ENCODE measurements at regions of chr21 and their contacts with region 1.

Region 1: DNA sequence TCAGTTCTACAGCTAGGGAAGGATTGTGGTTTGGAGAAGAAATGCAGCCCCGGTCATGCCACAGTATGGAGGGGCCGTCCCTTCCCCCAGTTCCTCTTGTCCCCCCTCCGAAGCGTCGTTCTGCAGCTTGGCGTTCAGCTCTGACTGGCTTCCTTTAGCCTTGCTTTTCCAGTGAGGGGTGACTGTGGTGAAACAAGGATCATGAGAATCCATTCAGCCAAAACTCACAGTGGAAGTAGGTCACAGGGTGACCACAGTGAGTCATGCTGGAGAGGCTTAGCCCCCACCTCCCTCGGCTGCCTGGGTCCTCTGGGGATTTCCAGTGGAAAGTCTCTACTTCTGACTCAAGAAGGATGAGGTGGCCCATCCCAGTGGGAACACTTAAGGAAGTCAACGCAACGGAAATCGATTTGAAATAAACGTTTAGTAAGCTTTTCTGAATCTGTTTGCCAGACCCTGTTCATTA is 37.3 kb upstream of the COL6A2 start:
- DNase-seq: peak; percentile 82 to 88 (median 84)
- ATAC-seq: peak; percentile 48 to 75 (median 72)
- H3K4me3 ChIP-seq: no peak overlapping the region
- H3K27ac ChIP-seq: peak overlapping the region; percentile 46 to 94 (median 80)
- H3K4me1 ChIP-seq: peaks cover 0 to 38% (median 25%) of the 10 kb centered on the region in 12 donors
- H3K27me3 ChIP-seq: peaks cover 0 to 7% (median 0%) of the 10 kb centered on the region in 9 donors
- CTCF ChIP-seq: no peak
- POLR2A ChIP-seq: no peak

Region 2: DNA sequence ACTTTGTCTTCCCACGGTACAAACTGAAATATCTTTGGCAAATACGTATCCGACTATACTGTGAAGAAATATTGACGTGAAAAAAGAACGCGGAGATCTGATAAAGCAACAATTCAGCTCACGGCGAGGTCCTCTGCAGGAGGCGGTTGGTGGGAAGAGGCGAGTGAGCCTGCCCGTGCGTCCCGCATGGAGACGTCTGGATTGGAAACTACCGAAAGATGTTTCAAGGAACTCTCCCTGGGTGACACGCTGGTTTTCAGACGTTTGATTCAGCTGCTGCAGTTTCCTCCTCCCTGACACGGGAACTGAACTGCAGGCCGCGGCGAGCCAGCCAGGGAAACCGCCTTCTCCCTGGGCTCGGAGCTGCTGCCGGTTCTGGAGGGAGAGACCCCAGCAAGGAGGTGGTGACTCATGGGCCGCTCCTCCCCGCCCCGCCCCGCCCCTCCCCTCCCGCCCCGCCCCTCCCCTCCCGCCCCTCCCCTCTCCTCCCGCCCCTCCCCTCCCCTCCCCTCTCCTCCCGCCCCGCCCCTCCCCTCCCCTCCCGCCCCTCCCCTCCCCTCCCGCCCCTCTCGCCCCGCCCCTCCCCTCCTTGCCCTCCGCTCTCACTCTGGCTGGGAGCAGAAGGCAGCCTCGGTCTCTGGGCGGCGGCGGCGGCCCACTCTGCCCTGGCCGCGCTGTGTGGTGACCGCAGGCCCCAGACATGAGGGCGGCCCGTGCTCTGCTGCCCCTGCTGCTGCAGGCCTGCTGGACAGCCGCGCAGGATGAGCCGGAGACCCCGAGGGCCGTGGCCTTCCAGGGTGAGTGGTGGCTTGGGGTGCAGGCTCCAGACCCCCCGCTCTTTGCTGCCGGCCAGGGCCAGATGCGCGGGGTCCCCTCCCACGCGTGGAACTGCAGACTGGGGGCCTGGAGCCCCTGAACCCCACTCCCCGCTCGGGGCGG is 79.2 kb before region 1 on chr21 and contains the start of gene COL6A1:
- intact Hi-C with region 1: loop called in 2 of 10 experiments (anchors 5 to 10 kb)
- DNase-seq: peak; percentile 84 to 89 (median 88)
- ATAC-seq: peak; percentile 74 to 82 (median 77)
- H3K4me3 ChIP-seq: peak within 1 kb of the TSS; percentile 65 to 99 (median 88)
- H3K27ac ChIP-seq: peak within 1 kb of the TSS; percentile 61 to 99 (median 88)
- H3K4me1 ChIP-seq: peaks cover 0 to 55% (median 20%) of the 10 kb centered on the region in 12 donors
- H3K27me3 ChIP-seq: peaks cover 0 to 15% (median 0%) of the 10 kb centered on the region in 9 donors
- CTCF ChIP-seq: peak in 1 of 12 donors; percentile 9
- POLR2A ChIP-seq: peak; percentile 42 to 77
- total RNA-seq, gene COL6A1: 92.4 to 385 (median 143) TPM

Region 3: DNA sequence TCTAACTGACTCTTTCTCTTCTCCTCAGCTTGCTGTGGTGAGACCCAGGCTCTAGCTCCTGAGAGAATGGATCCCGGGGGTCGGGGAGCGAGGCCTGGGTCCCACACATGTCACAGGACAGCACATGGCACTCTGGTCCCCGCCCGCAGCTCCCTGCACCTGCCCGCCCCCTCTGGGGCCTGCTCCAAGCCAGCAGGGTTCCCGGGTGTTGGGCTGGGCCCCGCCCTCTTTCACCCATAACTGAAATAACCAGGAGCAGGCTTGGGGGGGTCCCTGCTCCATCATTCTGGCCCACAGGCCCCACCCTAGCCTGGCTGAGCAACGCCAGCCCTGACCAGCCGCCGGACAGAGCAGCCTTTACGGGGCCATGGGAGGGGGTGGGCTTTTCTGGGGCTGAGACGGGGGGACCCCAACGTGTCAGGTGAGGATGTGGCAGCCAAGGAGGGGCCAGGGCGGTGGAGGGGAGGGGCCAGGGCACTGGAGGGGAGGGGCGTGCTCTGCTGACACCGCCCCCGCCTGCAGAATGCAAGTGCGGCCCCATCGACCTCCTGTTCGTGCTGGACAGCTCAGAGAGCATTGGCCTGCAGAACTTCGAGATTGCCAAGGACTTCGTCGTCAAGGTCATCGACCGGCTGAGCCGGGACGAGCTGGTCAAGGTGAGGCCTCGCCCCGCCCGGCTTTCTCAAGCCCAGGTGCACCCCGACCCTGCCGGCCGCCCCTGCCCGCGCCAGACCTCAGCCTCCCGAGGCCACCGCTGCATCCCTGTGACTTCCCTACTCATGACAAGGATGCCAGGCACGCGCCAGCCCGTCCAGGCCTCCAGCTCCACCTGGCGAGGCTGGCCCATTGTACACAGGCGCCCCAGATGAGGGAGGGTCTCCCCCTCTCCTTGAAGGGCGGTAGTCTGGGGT is 59.6 kb before region 1 on chr21:
- intact Hi-C with region 1: no loop called
- DNase-seq: peak in 4 of 5 donors; percentile 23 to 58 (median 32)
- ATAC-seq: peak in 1 of 4 donors; percentile 9
- H3K4me3 ChIP-seq: no peak overlapping the region
- H3K27ac ChIP-seq: peak overlapping the region in 1 of 12 donors; percentile 80
- H3K4me1 ChIP-seq: no peaks in the 10 kb centered on the region
- H3K27me3 ChIP-seq: no peaks in the 10 kb centered on the region
- CTCF ChIP-seq: no peak
- POLR2A ChIP-seq: no peak

Region 4: DNA sequence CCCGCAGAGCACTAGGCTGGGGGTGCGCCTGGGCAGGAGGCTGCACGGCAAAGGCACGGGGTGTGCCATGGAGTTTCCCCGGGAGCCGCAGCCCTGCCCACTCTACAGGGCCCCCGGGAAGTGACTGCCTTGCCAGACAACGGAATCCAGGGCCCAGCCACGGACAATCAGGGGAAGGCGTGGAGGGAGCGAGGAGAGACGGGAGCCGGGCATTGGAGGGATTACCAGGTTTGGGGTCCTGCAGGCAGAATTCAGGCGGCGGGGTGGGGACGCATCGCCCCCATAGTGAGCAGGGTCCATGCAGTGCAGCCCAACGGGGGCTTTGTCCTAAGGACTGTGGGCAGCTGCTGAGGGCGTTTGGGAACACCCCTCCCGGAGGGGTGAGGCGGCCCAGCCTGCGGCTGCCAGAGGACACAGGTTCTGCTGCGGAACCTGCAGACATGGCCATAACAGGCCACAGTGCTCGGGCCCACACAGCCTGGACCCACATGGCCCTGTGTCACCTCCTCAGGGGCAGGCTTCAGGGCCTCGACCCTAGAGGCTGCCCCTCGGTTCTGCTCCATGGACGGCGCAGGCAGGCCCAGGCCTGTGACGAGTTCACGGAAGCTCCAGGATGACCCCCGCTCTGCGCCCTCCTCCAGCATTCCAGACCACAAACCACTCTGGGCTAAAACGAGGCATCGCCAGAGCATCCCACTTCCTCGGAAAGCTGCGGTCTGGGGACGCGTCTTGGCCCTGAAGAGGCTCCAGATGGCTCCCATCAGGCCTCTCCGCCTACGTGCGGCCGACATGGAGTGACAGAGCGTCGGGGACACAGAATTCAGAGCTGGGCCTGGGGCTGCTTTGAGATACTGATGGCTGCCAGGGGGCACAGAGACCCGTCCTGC is 24.6 kb before region 1 on chr21:
- intact Hi-C with region 1: loop called in 1 of 10 experiments (anchors 1 kb)
- DNase-seq: peak; percentile 79 to 87 (median 84)
- ATAC-seq: peak; percentile 66 to 81 (median 72)
- H3K4me3 ChIP-seq: no peak overlapping the region
- H3K27ac ChIP-seq: peak overlapping the region in 11 of 12 donors; percentile 56 to 87 (median 67)
- H3K4me1 ChIP-seq: peaks cover 0 to 33% (median 16%) of the 10 kb centered on the region in 12 donors
- H3K27me3 ChIP-seq: no peaks in the 10 kb centered on the region
- CTCF ChIP-seq: no peak
- POLR2A ChIP-seq: no peak

Region 5: DNA sequence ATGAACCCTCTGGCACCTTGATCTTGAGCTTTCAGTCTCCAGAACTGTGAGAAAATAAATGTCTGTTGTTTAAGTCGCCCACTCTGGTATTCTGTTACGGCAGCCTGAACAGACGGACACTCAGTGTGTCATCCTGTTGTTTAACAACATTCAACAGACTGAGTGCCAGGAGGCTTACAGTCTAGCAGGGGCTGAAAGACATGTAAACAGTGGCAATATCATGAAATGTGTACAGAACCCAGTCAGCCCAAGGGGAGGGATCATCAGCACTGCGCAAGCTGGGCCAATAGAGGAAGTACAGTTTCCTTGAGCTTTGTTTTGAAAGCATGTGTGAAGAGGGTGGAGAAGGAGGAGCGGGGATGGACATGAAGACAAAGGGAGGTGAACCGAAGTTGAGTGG is 411.6 kb after region 1 on chr21:
- intact Hi-C with region 1: no loop called
- DNase-seq: no peak
- ATAC-seq: peak; percentile 42 to 82 (median 65)
- H3K4me3 ChIP-seq: no peak overlapping the region
- H3K27ac ChIP-seq: peak overlapping the region in 2 of 12 donors; percentile 30 to 44
- H3K4me1 ChIP-seq: peaks cover 0 to 38% (median 11%) of the 10 kb centered on the region in 12 donors
- H3K27me3 ChIP-seq: no peaks in the 10 kb centered on the region
- CTCF ChIP-seq: no peak
- POLR2A ChIP-seq: no peak